ENCODE measurements at regions of chr12 and their contacts with region 1.

Region 1: DNA sequence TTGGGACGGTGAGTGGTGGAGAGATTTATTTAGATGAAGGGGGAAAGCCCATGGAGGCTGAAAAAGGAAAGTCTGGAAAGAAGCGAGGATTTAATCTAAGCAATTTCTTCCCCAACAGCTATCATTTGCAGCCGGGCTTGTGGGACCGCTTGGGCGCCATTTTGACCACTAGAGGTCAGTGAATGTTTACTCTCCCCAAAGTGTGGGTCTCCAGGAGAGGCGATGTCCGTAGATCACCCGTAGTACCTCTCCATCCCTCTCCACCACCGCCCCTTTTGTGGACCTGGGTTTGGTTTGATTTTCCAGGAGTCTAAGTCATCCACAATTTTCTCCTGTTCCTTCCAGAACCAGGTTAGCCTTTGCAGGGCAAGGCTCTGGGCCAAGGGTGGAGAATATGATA is 91.2 kb upstream of the PARP11 start:
- DNase-seq: peak; percentile 71
- ATAC-seq: peak; percentile 90
- H3K4me3 Mint-ChIP-seq: no peak overlapping the region
- H3K27ac Mint-ChIP-seq: no peak overlapping the region
- H3K4me1 Mint-ChIP-seq: peaks cover 17% of the 10 kb centered on the region
- H3K27me3 Mint-ChIP-seq: no peaks in the 10 kb centered on the region; the same call in 1 of the 2 replicates
- CTCF ChIP-seq: peak; percentile 11; the same call in 1 of the 2 replicates

Region 2: DNA sequence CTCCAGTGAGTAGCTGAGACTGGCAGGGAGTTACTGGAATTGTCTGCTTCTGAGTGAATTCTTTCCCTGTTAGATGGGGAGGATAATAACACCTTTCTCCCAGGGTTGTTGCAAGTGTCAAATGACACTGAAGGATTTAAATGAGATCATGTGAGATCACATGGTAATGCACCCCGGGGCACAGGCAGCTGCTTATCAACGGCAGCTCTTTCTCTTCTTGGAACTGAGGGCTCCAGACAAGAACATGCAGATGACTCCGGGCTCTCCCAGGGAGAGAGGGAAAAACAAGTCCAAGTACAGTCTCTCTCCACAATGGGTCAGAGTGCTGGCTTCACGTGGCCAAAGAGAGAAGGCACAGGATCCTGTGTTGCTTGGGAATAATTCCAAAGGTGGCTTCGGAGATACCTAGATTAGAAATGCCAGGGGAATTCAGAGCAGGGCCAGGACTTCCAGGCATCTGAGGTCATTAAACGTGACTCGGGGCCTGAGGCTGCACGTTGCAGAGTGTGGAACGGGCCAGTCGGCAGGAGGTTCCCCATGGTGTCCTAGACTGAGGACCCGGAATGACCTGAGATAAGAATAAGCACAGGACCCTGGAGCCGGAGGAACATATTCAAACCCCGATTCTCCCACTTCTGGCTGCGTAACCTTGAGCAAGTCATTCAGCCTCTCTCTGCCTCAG is 364.3 kb before region 1 on chr12:
- CTCF ChIA-PET with region 1: no interaction called
- POLR2A ChIA-PET with region 1: no interaction called
- DNase-seq: no peak
- ATAC-seq: peak; percentile 38
- H3K4me3 Mint-ChIP-seq: no peak overlapping the region
- H3K27ac Mint-ChIP-seq: peak overlapping the region; percentile 70
- H3K4me1 Mint-ChIP-seq: peaks cover 62% of the 10 kb centered on the region
- H3K27me3 Mint-ChIP-seq: peaks cover 3% of the 10 kb centered on the region
- CTCF ChIP-seq: no peak

Region 3: GRCh38 chr12:3885277-3886094 is 79.0 kb before region 1 on chr12:
- CTCF ChIA-PET with region 1: interaction called, 21 read pairs
- POLR2A ChIA-PET with region 1: no interaction called
- DNase-seq: no peak
- ATAC-seq: no peak
- H3K4me3 Mint-ChIP-seq: no peak overlapping the region
- H3K27ac Mint-ChIP-seq: no peak overlapping the region
- H3K4me1 Mint-ChIP-seq: peaks cover 20% of the 10 kb centered on the region
- H3K27me3 Mint-ChIP-seq: no peaks in the 10 kb centered on the region; the same call in 1 of the 2 replicates
- CTCF ChIP-seq: peak; percentile 57; the same call in 1 of the 2 replicates

Region 4: GRCh38 chr12:3901116-3901515 is 63.3 kb before region 1 on chr12:
- CTCF ChIA-PET with region 1: interaction called, 10 read pairs
- POLR2A ChIA-PET with region 1: no interaction called
- DNase-seq: no peak
- ATAC-seq: no peak
- H3K4me3 Mint-ChIP-seq: no peak overlapping the region
- H3K27ac Mint-ChIP-seq: no peak overlapping the region
- H3K4me1 Mint-ChIP-seq: peaks cover 2% of the 10 kb centered on the region; the same call in 1 of the 2 replicates
- H3K27me3 Mint-ChIP-seq: no peaks in the 10 kb centered on the region
- CTCF ChIP-seq: no peak

Region 5: GRCh38 chr12:3951380-3952135 is 12.9 kb before region 1 on chr12:
- CTCF ChIA-PET with region 1: interaction called, 20 read pairs
- POLR2A ChIA-PET with region 1: no interaction called
- DNase-seq: no peak
- ATAC-seq: 0 out of 2 replicates have a peak, but pooled peaks have one; percentile 24
- H3K4me3 Mint-ChIP-seq: no peak overlapping the region
- H3K27ac Mint-ChIP-seq: no peak overlapping the region
- H3K4me1 Mint-ChIP-seq: peaks cover 7% of the 10 kb centered on the region
- H3K27me3 Mint-ChIP-seq: peaks cover 12% of the 10 kb centered on the region
- CTCF ChIP-seq: no peak

Region 6: DNA sequence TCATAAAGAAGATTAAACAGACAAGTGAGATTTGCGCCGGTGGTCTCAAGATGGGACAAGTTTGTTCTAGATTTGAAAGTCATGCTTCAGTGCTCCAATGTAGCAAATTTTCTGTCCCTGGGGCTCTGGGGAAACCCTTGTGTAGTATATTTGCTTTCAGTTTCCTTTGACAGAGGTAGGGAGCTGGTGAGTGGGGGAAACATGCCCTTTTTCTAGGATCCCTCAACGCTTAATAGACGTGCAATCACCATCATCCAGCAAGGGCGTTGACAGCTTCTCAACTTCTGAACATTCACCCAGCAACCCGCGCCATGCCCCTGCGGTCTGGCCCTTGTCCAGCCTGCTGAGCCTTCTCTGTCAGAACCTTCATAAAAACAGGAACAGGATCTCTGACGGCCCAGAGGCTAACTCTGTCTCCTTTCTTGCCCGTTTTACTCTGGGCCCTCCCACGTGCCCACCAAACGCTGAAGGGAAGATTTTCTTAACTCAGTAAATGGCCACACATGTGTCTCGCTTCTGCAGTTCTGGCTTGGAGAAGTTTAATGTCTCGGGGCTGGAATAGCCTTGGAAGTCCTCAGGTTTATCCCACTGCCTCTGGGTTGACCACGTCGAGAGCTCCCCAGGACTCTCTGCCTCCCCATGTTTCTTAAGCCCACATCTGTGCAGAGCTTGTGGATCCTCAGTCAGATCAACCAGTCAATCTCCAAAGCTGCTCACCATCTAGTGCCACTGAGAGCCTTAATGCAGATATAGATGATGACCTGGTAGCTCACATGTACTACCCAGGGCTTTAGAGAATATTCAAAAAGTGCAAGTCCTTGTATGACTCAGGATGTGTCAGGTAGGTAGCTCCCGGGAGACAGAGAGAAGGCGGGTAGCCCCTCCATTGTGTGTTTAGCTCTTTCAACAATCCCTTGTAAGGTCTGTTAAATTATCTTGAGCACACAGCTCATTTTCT is 251.1 kb after region 1 on chr12:
- CTCF ChIA-PET with region 1: no interaction called
- POLR2A ChIA-PET with region 1: no interaction called
- DNase-seq: no peak
- ATAC-seq: no peak
- H3K4me3 Mint-ChIP-seq: no peak overlapping the region
- H3K27ac Mint-ChIP-seq: no peak overlapping the region
- H3K4me1 Mint-ChIP-seq: peaks cover 14% of the 10 kb centered on the region
- H3K27me3 Mint-ChIP-seq: peaks cover 6% of the 10 kb centered on the region; the same call in 1 of the 2 replicates
- CTCF ChIP-seq: no peak